ENCODE measurements at regions of chr12 and their contacts with region 1.

Region 1: DNA sequence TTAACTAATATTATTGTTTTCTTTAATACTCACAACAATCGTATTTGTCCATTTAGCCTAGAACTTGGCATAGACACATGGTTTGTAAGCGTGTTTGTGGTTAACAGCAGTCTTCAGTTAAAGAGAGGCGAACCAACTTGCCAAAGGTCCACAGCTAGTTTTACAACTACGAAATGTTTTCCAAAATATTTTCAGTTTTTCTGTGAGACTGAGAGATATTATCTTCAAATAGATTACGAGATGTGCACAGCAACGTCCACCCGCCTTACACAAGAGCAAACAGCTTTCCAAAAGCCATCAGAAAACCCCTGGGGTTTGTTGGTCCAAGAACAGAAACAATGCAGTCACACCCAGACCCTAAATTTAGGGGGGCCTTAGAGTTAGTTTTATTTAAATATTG is 58.6 kb upstream of the RASSF3 start:
- DNase-seq: no peak
- H3K4me3 Mint-ChIP-seq: no peak overlapping the region
- H3K27ac Mint-ChIP-seq: no peak overlapping the region
- H3K4me1 Mint-ChIP-seq: peaks cover 8% of the 10 kb centered on the region
- H3K27me3 Mint-ChIP-seq: no peaks in the 10 kb centered on the region

Region 2: GRCh38 chr12:64571411-64571810 is 19.7 kb after region 1 on chr12:
- CTCF ChIA-PET with region 1: interaction called, 14 read pairs
- POLR2A ChIA-PET with region 1: no interaction called
- intact Hi-C with region 1: no loop called
- DNase-seq: peak; percentile 15
- H3K4me3 Mint-ChIP-seq: no peak overlapping the region
- H3K27ac Mint-ChIP-seq: no peak overlapping the region
- H3K4me1 Mint-ChIP-seq: peaks cover 24% of the 10 kb centered on the region
- H3K27me3 Mint-ChIP-seq: no peaks in the 10 kb centered on the region

Region 3: DNA sequence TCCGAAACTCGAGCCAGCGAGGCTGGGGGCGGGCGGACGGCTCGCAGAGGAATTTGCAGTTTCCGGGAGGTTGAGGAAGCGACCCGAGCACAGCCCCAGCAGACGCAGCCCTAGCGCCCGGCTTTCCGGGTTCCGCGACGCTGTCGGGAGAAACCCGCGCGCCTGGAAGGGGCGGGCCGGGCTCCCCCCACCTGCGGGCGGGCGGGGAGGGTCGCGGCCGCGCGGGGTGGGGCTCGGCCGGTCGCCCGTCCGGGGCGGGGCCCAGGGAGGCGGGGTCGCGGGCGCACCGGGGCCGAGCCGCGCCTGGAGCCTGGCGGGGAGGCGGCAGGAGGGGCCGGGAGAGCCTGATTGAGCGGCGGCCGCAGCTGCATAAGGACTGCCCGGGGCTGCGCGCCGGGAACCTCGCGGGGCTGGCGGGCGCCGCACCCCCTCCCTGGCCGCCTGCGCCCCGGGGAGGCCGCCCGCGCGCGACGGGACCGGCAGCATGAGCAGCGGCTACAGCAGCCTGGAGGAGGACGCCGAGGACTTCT is 58.5 kb after region 1 on chr12 and contains the start of gene RASSF3:
- CTCF ChIA-PET with region 1: interaction called, 46 read pairs
- POLR2A ChIA-PET with region 1: no interaction called
- intact Hi-C with region 1: loop called (anchors 1 kb)
- DNase-seq: peak; percentile 83
- H3K4me3 Mint-ChIP-seq: peak within 1 kb of the TSS; percentile 95
- H3K27ac Mint-ChIP-seq: peak within 1 kb of the TSS; percentile 98
- H3K4me1 Mint-ChIP-seq: peaks cover 37% of the 10 kb centered on the region
- H3K27me3 Mint-ChIP-seq: no peaks in the 10 kb centered on the region
- total RNA-seq, gene RASSF3: 40.6 to 40.7 TPM

Region 4: DNA sequence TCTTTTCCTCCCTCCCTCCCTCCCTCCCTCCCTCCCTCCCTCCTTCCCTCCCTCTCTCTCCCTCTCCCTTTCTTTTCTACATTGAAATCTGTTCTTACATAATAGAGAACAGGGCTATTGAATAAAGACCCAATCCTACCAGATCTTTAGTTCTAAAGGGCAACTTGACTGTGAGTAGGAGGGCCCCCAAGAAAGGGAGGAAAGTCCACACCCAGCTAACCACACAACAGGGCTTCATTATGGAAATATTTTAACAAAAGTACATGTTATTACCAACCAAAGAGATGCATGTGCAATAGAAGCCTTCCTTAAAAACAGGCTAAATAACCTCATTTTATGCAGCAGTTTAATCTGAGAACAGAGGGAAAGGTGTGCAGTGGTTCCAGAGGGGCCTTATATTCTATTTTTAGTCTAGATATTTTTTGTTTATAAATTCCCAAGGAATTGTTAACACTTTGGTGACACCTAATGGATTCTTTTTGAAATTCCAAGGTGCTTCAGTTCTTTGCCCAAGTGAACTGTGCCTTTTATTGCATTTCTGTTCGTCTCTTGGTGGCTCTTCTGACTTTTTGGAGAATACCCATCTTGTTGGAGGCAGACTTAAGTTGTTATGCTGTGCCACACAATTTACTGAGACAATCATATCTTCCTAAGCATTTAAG is 144.5 kb after region 1 on chr12:
- CTCF ChIA-PET with region 1: interaction called, 161 read pairs
- POLR2A ChIA-PET with region 1: interaction called, 5 read pairs
- intact Hi-C with region 1: loop called (anchors 1 kb)
- DNase-seq: no peak
- H3K4me3 Mint-ChIP-seq: no peak overlapping the region
- H3K27ac Mint-ChIP-seq: peak overlapping the region; percentile 30
- H3K4me1 Mint-ChIP-seq: peaks cover 63% of the 10 kb centered on the region
- H3K27me3 Mint-ChIP-seq: no peaks in the 10 kb centered on the region

Region 5: DNA sequence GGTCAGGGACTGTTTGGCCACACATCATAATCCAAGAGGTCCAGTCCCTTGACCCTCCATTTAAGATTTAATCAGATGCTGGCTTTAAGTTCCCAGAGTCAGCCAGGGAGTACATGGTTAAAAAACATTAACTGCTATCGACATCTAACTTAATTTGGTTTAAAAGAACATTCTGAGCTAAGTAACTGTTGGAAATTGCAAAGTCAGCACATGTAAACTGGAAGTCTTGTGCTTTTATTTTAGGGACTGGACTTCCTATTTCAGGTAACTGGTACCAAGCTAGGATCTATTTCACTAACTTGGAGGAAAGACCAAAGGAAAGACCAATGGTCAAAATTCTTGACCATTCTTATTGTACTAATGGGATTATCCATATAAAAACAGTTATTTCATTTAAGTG is 167.0 kb after region 1 on chr12:
- CTCF ChIA-PET with region 1: interaction called, 10 read pairs
- POLR2A ChIA-PET with region 1: no interaction called
- intact Hi-C with region 1: no loop called
- DNase-seq: no peak
- H3K4me3 Mint-ChIP-seq: no peak overlapping the region
- H3K27ac Mint-ChIP-seq: no peak overlapping the region
- H3K4me1 Mint-ChIP-seq: peaks cover 20% of the 10 kb centered on the region
- H3K27me3 Mint-ChIP-seq: no peaks in the 10 kb centered on the region

Region 6: GRCh38 chr12:64796208-64796845 is 244.6 kb after region 1 on chr12:
- CTCF ChIA-PET with region 1: interaction called, 10 read pairs
- POLR2A ChIA-PET with region 1: no interaction called
- intact Hi-C with region 1: no loop called
- DNase-seq: peak; percentile 53
- H3K4me3 Mint-ChIP-seq: no peak overlapping the region
- H3K27ac Mint-ChIP-seq: no peak overlapping the region
- H3K4me1 Mint-ChIP-seq: no peaks in the 10 kb centered on the region
- H3K27me3 Mint-ChIP-seq: peaks cover 13% of the 10 kb centered on the region

Region 7: DNA sequence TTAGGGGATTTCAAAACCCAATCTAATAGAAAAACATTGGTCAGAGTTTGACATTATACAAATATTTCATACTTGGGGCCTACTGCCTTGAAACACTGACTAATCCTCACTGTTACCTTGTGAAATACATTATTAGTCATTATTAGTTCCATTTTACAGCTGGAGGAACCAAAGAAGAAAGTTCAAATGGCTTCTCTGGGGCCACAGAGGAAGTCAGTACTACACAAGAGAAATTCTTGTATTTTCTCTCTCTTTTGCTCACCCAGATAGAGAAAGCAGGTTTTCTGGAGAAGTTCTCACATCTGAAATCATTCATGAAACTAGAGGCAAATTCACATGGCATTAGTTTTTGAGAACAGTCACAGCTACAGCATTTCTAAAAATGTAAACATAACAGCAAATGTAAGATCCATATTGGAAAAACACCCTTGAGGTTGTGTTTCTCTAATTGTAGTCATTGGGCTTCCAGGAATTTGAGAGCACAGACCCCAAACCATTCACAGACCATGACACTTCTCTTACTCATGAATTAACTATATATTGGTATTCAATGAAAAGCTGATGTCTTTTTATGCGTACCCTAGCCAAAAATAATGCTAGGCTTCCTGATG is 1495.8 kb after region 1 on chr12:
- CTCF ChIA-PET with region 1: no interaction called
- POLR2A ChIA-PET with region 1: no interaction called
- intact Hi-C with region 1: no loop called
- DNase-seq: no peak
- H3K4me3 Mint-ChIP-seq: no peak overlapping the region
- H3K27ac Mint-ChIP-seq: no peak overlapping the region
- H3K4me1 Mint-ChIP-seq: peaks cover 3% of the 10 kb centered on the region
- H3K27me3 Mint-ChIP-seq: peaks cover 13% of the 10 kb centered on the region